ENCODE measurements at regions of chr3 and their contacts with region 1.

Region 1: DNA sequence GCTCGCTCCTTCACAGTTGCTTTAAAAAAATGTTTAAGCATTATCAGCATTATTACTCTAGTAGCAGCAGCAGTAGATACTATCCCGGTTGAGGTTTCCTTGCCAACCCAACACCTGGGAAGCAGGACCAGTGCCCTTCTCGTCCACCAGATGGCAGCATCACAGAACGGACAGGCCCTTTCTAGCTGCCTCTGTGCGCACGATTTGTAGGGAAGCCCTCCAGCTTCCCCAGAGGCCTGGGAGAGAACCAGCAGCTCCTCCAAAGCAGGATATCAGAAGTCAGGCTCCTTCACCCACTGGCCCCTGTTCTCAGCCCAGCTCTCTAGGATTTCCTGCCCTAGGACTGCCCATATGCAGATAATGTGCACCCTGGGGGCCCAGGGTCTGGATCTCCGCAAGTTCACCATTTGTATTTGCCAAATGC is 16.8 kb upstream of the ESYT3 start:
- DNase-seq: peak; percentile 78 to 83 (median 79)
- H3K4me3 ChIP-seq: no peak overlapping the region
- H3K27ac ChIP-seq: no peak overlapping the region
- H3K4me1 ChIP-seq: peaks cover 0 to 3% (median 0%) of the 10 kb centered on the region in 4 experiments
- H3K27me3 ChIP-seq: peaks cover 0 to 5% (median 0%) of the 10 kb centered on the region in 5 experiments

Region 2: GRCh38 chr3:138397983-138398382 is 19.6 kb before region 1 on chr3:
- CTCF ChIA-PET with region 1: interaction called, 16 read pairs
- POLR2A ChIA-PET with region 1: no interaction called
- DNase-seq: no peak
- H3K4me3 ChIP-seq: no peak overlapping the region
- H3K27ac ChIP-seq: no peak overlapping the region
- H3K4me1 ChIP-seq: no peaks in the 10 kb centered on the region
- H3K27me3 ChIP-seq: no peaks in the 10 kb centered on the region

Region 3: DNA sequence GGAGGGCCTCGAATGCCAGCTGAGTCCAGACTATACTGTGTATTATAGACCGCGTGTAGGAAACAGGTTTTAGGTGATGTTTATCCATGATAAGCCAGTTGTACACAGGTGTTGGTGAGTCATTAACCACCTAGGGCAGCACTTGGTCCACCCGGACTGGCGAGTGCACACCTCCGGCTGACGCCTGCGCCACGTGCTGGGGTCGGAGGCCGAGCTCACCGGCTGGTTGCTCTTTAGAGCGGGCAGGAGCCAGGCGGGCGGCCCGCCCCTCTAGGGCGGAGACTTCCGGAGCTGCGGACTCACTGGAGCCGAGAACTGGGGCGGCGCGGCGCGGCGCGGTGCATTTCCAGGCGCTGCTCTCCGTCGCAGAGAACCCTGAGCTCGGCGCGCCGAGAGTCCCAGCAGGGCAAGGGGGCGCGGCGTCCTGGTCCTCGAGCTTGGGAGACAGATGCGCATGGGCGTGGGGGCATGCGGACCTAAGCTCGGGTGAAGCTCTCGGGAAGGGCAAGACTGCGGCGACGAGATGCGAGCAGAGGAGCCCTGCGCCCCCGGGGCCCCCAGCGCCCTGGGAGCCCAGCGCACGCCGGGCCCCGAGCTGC is 16.8 kb after region 1 on chr3 and contains the start of gene ESYT3:
- CTCF ChIA-PET with region 1: interaction called, 38 read pairs
- POLR2A ChIA-PET with region 1: no interaction called
- DNase-seq: peak; percentile 54 to 83 (median 69)
- H3K4me3 ChIP-seq: peak within 1 kb of the TSS; percentile 25 to 72 (median 56)
- H3K27ac ChIP-seq: no peak within 1 kb of the TSS
- H3K4me1 ChIP-seq: peaks cover 0 to 22% (median 17%) of the 10 kb centered on the region in 4 experiments
- H3K27me3 ChIP-seq: peaks cover 0 to 63% (median 33%) of the 10 kb centered on the region in 5 experiments

Region 4: GRCh38 chr3:138459619-138460535 is 42.3 kb after region 1 on chr3:
- CTCF ChIA-PET with region 1: interaction called, 14 read pairs
- POLR2A ChIA-PET with region 1: no interaction called
- DNase-seq: no peak
- H3K4me3 ChIP-seq: no peak overlapping the region
- H3K27ac ChIP-seq: no peak overlapping the region
- H3K4me1 ChIP-seq: no peaks in the 10 kb centered on the region
- H3K27me3 ChIP-seq: peaks cover 0 to 3% (median 0%) of the 10 kb centered on the region in 5 experiments

Measured in common myeloid progenitor, CD34-positive (primary cell).